Posterior cingulate gyrus (tissue), 11 donors: ENCODE measurements at regions of chr22 and their contacts with region 1.

Region 1: GRCh38 chr22:39514373-39514973 is 5.9 kb upstream of the ATF4 start:
- DNase-seq: peak in 9 of 10 donors; percentile 47 to 95 (median 75)

Region 2: GRCh38 chr22:39170825-39171622 is 343.4 kb before region 1 on chr22:
- intact Hi-C with region 1: loop called (anchors 5 kb)
- DNase-seq: peak; percentile 75 to 98 (median 90)

Region 3: GRCh38 chr22:39400970-39401631 is 113.4 kb before region 1 on chr22:
- intact Hi-C with region 1: loop called (anchors 5 kb)
- DNase-seq: peak in 3 of 10 donors; percentile 8 to 41 (median 22)